Heart right ventricle (tissue), 16 donors: ENCODE measurements at regions of chr6 and their contacts with region 1.

Region 1: DNA sequence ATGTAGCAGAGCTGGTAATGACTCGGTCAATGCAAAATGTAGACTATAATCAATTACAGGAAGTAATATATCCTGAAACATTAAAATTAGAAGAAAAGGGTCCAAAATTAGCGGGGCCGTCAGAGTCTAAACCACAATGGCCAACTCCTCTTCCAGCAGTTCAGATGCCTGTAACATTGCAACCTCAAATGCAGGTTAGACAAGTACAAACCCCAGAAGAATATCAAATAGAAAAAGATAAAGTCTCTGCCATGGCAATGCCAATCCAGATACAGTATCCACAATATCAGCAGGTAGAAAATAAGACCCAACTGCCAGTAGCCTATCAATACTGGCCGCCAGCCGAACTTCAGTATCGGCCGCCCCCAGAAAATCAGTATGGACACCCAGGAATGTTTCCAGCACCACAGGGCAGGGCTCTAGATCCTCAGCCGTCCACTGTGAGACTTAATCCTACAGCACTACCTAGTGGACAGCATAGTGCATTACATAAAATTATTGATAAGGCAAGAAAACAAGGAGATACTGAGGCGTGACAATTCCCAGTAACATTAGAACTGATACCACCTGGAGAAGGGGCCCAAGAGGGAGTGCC is 158.4 kb downstream of the GPX5 start:
- DNase-seq: no peak
- ATAC-seq: peak in 1 of 8 donors; percentile 47
- H3K4me3 ChIP-seq: no peak overlapping the region
- H3K27ac ChIP-seq: no peak overlapping the region
- H3K4me1 ChIP-seq: peaks cover 0 to 10% (median 0%) of the 10 kb centered on the region in 9 donors
- H3K27me3 ChIP-seq: peaks cover 14 to 90% (median 78%) of the 10 kb centered on the region in 7 donors
- CTCF ChIP-seq: peak; percentile 14 to 56 (median 42)

Region 2: GRCh38 chr6:28399350-28400121 is 284.5 kb before region 1 on chr6 and contains the start of gene ZSCAN12:
- intact Hi-C with region 1: loop called in 1 of 10 experiments (anchors 10 kb)
- DNase-seq: peak; percentile 82 to 83
- ATAC-seq: peak; percentile 90 to 98 (median 97)
- H3K4me3 ChIP-seq: peak within 1 kb of the TSS; percentile 68 to 97 (median 80)
- H3K27ac ChIP-seq: peak within 1 kb of the TSS in 9 of 10 donors; percentile 6 to 77 (median 45)
- H3K4me1 ChIP-seq: peaks cover 3 to 38% (median 14%) of the 10 kb centered on the region in 9 donors
- H3K27me3 ChIP-seq: peaks cover 0 to 12% (median 0%) of the 10 kb centered on the region in 7 donors
- CTCF ChIP-seq: peak; percentile 21 to 73 (median 53)
- total RNA-seq, gene ZSCAN12: 2.2 to 3.5 (median 2.9) TPM

Region 3: GRCh38 chr6:28531479-28532128 is 152.4 kb before region 1 on chr6:
- intact Hi-C with region 1: no loop called
- DNase-seq: no peak
- ATAC-seq: no peak
- H3K4me3 ChIP-seq: no peak overlapping the region
- H3K27ac ChIP-seq: no peak overlapping the region
- H3K4me1 ChIP-seq: no peaks in the 10 kb centered on the region
- H3K27me3 ChIP-seq: peaks cover 0 to 75% (median 50%) of the 10 kb centered on the region in 7 donors
- CTCF ChIP-seq: no peak

Region 4: DNA sequence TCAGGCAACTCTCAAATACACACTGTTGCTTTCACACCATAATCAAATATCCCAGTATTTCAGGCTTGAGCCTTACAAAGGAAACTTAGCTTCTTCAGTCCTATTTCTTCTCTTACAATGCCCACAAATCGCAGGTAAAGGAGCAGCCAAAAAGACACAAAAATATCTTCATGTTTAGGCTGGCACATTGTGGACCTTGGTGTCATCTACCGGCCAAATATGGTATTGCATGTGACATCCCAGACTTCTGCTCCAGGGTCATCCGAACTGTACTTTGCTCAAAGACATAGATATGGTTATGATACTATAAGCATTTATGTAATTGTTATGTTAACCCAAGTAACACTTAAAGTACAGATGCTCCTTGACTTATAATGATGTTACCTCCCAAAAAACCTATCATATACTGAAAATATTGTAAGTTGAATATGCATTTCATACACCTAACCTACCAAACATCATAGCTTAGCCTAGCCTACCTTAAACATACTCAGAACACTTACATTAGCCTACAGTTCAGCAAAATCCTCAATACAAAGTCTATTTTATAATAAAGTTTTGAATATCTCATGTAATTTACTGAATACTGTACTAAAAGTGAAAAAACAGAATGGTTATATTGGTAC is 905.5 kb after region 1 on chr6:
- intact Hi-C with region 1: loop called in 7 of 10 experiments (anchors 2 to 10 kb)
- DNase-seq: peak in 1 of 2 donors; percentile 31
- ATAC-seq: peak in 2 of 8 donors; percentile 52 to 62
- H3K4me3 ChIP-seq: no peak overlapping the region
- H3K27ac ChIP-seq: no peak overlapping the region
- H3K4me1 ChIP-seq: no peaks in the 10 kb centered on the region
- H3K27me3 ChIP-seq: peaks cover 0 to 27% (median 17%) of the 10 kb centered on the region in 7 donors
- CTCF ChIP-seq: peak; percentile 81 to 97 (median 92)